ENCODE measurements at regions of chr11 and their contacts with region 1.

Region 1: DNA sequence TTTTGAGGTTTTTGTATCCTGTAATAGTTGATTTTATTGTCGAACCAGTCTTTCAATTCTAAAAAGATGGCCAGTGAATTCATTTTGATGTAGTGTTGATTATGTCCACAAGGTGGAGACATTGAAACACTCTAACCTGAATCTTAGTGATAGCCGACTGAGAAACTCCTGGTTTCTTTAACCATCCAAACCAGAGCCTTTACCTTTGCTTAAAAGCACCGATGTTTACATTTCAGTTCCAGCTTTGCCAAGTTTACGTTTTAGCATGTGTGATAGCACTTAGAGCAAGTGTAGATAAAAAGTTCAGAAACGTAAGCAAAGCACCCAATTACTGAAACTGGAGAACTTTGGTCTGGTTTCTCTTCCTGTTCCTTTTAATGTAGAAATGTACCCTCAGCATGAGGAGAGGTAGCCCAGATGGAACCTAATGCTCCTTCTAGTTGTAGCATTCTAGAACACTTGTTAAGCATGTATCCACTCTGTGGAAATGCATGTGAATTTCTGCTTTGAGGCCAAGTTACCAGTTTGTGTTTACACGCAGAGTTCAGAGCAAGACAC is 208.6 kb downstream of the DBX1 start:
- DNase-seq: no peak
- ATAC-seq: peak; percentile 49

Region 2: GRCh38 chr11:20048211-20048610 is 96.6 kb after region 1 on chr11:
- intact Hi-C with region 1: loop called (anchors 5 kb)
- DNase-seq: no peak
- ATAC-seq: no peak

Region 3: GRCh38 chr11:20110908-20111669 is 159.5 kb after region 1 on chr11:
- intact Hi-C with region 1: loop called (anchors 5 kb)
- DNase-seq: no peak
- ATAC-seq: peak; percentile 54

Region 4: DNA sequence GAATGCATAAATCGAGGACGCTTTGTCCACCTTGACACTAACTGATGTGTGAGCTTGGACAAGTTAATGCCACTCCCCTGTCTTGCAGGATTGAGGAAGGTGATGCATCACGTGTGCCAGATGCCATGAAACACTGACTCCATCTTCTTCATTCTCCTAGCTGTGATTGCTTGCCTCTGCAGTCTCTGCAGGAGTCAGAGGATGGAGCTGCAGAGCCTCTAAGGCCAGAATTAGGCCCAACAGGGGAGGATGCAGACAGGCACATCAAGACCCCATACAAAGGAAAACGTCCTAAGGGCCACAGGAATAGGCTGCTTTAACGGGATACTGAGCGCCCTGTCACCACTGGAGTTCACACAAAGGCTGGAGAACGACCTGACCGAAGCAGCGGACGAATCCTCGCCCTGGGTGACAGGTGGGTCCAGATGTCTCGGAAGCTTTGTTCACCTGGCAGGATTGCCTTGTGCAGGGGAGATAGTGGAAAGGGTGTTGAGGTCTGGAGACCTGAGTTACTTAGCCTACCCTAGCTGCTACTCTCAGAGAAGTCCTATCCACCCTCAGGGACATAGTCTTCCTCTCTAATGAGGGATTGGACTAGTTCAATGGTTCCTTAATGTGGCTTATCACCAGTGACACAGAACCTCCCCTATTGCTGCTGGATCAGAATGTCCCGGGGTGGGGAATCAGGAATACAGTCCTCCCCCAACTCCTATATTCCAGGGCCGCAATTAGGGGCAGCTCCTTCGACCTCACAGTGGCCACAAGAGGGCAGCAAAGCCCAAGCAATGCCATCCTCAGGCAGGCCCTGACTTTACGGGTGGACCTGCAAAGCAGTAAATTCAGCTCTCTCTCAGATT is 176.3 kb after region 1 on chr11:
- intact Hi-C with region 1: loop called (anchors 5 kb)
- DNase-seq: peak; percentile 75
- ATAC-seq: peak; percentile 82

Region 5: DNA sequence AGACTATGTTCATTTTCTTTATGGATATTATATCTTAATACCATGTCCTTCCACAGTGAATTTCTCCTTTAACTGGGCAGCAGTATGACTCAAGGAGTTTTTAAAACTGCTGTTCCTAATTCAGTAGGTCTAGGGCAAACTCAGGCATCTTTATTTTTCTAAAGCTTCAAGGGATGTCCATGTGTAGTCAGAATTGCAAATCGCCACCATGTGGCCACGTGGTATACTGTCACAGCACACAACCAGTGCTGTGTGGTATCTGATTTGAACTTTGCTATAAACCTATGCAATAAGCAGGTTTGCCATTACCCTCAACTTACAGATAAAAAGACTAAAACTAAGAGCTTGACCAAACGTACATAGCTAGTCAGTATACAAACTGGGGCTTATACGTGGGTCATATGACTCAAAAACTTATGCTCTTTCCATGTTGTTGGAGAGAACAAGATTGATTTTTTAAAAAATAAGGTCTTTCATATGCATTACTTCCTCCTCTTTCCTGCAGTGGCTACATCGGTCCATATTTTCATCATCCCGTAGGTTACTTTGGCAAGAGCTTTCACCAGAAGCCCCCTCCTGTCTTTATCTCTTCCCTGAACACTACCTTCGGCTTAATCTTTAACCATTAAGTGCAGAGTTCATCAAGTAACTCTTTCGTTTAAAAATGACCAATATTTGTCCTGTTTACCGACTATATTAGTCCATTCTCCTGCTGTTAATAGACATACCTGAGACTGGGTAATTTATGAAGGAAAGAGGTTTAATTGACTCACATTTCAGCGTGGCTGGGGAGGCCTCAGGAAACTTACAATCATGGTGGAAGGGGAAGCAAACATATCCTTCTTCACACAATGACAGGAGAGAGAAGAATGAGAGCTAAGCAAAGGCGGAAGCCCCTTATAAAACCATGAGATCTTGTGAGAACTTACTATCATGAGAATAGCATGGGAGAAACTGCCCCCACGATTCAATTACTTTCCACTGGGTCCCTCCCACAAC is 403.9 kb after region 1 on chr11:
- intact Hi-C with region 1: loop called (anchors 10 kb)
- DNase-seq: no peak
- ATAC-seq: peak; percentile 60